Esophagus muscularis mucosa (tissue), 4 donors: ENCODE measurements at regions of chr1 and their contacts with region 1.

Region 1: DNA sequence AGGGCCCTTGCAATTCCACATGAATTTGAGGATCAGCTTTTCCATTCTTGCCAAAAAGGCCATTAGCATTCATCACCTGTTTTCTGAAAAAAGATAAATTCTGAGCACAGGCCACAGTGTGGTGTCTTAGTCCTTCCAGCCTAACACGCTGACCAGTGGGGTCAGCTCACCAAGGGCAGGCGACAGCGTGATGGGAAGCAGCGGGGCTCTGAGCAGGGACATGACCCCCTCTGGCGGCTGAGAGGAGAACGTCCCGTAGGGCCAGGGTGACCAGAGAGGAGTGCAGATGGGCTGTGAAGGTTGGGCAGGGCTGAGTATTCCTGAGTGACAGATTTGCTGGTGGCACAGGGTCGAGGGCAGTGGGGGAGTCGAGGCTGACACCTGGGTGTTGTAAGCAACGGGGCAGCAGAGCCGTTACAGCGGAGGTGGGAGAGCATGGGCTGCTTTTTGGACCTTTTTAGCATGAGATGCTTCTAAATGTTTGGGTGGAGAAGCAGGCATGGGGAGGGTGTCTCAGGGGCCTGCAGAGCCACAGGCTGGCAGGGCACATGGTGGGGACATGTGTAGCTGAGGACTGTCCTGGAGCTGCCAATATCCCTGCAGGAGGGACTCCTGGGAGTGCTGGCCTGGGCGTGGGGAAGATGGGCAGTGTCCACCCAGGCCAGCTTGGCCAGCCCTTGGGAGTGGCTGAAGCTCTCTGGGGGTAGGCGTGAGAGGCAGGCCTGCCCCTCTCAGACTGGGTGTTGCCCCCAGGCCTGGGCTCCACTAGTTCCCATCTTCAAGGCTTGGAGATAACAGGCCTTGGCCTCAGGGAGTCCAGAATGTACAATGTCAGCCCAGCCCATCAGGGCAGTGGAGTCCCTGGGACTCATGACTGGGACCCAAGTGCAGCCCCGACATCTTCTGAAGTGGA is 8.6 kb upstream of the CALML6 start:
- DNase-seq: no peak
- H3K4me3 ChIP-seq: no peak overlapping the region
- H3K27ac ChIP-seq: peak overlapping the region; percentile 6 to 53 (median 46)
- H3K4me1 ChIP-seq: peaks cover 28 to 38% (median 34%) of the 10 kb centered on the region in 4 donors
- H3K27me3 ChIP-seq: no peaks in the 10 kb centered on the region
- CTCF ChIP-seq: peak; percentile 86 to 97 (median 97)
- EP300 ChIP-seq: no peak
- POLR2A ChIP-seq: no peak

Region 2: DNA sequence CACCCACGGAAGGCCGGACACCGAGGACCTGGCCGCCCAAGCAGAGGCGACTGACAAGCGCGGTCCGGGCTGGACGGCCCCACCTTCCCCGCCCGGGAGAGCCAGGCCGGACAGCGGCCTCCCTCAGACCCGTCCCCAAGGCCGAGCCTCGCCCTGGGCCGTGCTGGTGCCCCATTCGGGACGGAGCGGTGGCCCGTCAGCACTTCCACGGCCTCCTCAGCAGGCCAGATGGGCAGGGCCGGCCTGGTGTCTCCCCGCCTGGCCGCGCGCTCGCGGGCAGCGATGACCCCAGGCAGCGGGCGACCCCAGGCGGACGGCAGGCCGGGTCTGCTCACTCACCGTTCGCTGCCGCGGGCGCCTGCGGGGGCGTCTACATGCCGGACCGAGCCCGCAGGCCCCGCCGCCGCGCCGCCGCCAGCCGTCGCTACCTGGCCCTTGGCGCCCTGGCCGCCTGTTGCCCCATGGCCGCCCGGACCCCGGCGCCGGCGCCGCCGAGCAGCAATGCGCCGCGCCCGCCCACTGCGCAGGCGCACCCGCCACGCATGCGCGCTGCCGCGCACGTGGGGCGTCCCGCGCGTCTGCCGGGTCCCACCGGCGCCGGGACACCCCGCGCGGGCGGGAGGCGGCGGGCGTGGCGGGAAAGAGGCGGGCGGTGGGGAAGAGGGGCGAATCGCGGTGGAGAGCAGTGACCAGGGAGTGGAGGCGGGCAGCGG is 128.3 kb before region 1 on chr1 and contains the start of gene NADK:
- intact Hi-C with region 1: loop called (anchors 1 kb)
- DNase-seq: no peak
- H3K4me3 ChIP-seq: peak within 1 kb of the TSS; percentile 80 to 95 (median 94)
- H3K27ac ChIP-seq: peak within 1 kb of the TSS; percentile 91 to 98 (median 96)
- H3K4me1 ChIP-seq: peaks cover 63 to 92% (median 82%) of the 10 kb centered on the region in 4 donors
- H3K27me3 ChIP-seq: no peaks in the 10 kb centered on the region
- CTCF ChIP-seq: peak in 1 of 3 experiments; percentile 23
- EP300 ChIP-seq: no peak
- POLR2A ChIP-seq: no peak
- total RNA-seq, gene NADK: 66.4 to 119 (median 82.7) TPM